Mammary epithelial cell (primary cell): ENCODE measurements at regions of chr14 and their contacts with region 1.

Region 1: GRCh38 chr14:37903343-37904191 is 304.1 kb upstream of the SSTR1 start:
- DNase-seq: peak; percentile 23
- H3K4me3 ChIP-seq: no peak overlapping the region
- H3K27ac ChIP-seq: no peak overlapping the region
- H3K4me1 ChIP-seq: no peaks in the 10 kb centered on the region
- H3K27me3 ChIP-seq: no peaks in the 10 kb centered on the region
- CTCF ChIP-seq: peak; percentile 50 to 51

Region 2: GRCh38 chr14:37936931-37937522 is 33.5 kb after region 1 on chr14:
- CTCF ChIA-PET with region 1: no interaction called
- dilution Hi-C with region 1: no loop called
- in situ Hi-C with region 1: no loop called
- intact Hi-C with region 1: no loop called
- DNase-seq: no peak
- H3K4me3 ChIP-seq: no peak overlapping the region
- H3K27ac ChIP-seq: no peak overlapping the region
- H3K4me1 ChIP-seq: no peaks in the 10 kb centered on the region
- H3K27me3 ChIP-seq: no peaks in the 10 kb centered on the region
- CTCF ChIP-seq: no peak

Region 3: DNA sequence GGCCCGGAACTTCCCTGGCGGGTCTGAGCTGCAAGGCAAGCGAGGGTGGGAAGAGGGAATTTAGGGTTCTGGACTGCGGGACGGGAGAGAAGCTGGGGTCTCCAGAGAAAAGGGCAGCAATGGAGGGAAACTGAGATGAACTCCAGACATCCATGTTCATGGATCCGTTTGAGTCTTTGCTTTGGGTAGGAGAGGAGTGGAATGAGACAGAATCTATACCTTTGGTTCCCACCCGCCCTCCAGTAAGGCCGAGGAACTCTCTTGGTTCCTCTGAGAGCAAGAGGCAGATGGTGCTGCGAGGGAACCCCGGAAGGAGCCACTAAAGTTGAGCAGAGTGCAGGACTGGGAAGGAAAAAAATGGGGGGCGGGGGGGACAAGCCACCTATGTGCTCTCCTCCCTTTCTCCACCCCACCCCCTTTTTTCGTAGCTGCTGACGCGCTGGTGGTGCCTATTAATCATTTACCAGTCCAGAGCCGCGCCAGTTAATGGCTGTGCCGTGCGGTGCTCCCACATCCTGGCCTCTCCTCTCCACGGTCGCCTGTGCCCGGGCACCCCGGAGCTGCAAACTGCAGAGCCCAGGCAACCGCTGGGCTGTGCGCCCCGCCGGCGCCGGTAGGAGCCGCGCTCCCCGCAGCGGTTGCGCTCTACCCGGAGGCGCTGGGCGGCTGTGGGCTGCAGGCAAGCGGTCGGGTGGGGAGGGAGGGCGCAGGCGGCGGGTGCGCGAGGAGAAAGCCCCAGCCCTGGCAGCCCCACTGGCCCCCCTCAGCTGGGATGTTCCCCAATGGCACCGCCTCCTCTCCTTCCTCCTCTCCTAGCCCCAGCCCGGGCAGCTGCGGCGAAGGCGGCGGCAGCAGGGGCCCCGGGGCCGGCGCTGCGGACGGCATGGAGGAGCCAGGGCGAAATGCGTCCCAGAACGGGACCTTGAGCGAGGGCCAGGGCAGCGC is 305.3 kb after region 1 on chr14:
- CTCF ChIA-PET with region 1: no interaction called
- dilution Hi-C with region 1: no loop called
- in situ Hi-C with region 1: no loop called
- intact Hi-C with region 1: loop called (anchors 10 kb)
- DNase-seq: no peak
- H3K4me3 ChIP-seq: no peak overlapping the region
- H3K27ac ChIP-seq: no peak overlapping the region
- H3K4me1 ChIP-seq: no peaks in the 10 kb centered on the region
- H3K27me3 ChIP-seq: peaks cover 3% of the 10 kb centered on the region
- CTCF ChIP-seq: no peak

Region 4: DNA sequence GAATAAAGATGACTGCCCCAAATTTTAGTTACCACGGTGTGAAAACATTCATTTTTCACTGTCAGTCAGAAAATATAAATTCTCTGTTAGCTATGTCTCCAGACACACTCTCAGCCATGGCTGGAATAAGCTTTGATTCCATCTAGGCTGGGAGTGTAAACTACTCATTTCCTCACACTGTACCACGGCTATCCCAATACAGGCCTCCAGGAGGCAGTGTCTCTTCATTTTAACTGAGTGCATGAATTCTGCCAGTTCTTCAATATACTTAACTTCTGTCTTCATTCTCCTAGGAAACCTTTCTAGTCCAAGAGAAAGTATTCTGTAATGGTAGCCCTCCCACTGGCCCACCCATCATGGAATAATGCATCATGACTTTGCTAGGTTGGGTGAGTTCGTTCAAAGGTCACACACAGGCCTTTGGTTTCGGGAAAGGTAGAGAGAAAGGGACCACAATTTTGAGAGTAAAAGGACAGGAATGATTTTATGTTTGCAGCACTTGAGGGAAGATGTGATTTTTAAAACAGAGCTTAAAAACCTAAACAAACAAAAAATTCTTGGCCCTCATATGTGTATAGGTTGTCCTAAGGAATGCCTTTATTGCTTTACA is 818.4 kb after region 1 on chr14:
- CTCF ChIA-PET with region 1: no interaction called
- dilution Hi-C with region 1: no loop called
- in situ Hi-C with region 1: no loop called
- intact Hi-C with region 1: loop called (anchors 5 kb)
- DNase-seq: peak; percentile 32
- H3K4me3 ChIP-seq: no peak overlapping the region
- H3K27ac ChIP-seq: no peak overlapping the region
- H3K4me1 ChIP-seq: no peaks in the 10 kb centered on the region
- H3K27me3 ChIP-seq: no peaks in the 10 kb centered on the region
- CTCF ChIP-seq: peak; percentile 78 to 86

Region 5: GRCh38 chr14:38867561-38868150 is 964.1 kb after region 1 on chr14:
- CTCF ChIA-PET with region 1: interaction called, 3 read pairs
- dilution Hi-C with region 1: no loop called
- in situ Hi-C with region 1: loop called (anchors 10 to 25 kb)
- intact Hi-C with region 1: loop called (anchors 1 kb)
- DNase-seq: peak; percentile 42
- H3K4me3 ChIP-seq: no peak overlapping the region
- H3K27ac ChIP-seq: no peak overlapping the region
- H3K4me1 ChIP-seq: no peaks in the 10 kb centered on the region
- H3K27me3 ChIP-seq: no peaks in the 10 kb centered on the region
- CTCF ChIP-seq: peak; percentile 86 to 88

Region 6: DNA sequence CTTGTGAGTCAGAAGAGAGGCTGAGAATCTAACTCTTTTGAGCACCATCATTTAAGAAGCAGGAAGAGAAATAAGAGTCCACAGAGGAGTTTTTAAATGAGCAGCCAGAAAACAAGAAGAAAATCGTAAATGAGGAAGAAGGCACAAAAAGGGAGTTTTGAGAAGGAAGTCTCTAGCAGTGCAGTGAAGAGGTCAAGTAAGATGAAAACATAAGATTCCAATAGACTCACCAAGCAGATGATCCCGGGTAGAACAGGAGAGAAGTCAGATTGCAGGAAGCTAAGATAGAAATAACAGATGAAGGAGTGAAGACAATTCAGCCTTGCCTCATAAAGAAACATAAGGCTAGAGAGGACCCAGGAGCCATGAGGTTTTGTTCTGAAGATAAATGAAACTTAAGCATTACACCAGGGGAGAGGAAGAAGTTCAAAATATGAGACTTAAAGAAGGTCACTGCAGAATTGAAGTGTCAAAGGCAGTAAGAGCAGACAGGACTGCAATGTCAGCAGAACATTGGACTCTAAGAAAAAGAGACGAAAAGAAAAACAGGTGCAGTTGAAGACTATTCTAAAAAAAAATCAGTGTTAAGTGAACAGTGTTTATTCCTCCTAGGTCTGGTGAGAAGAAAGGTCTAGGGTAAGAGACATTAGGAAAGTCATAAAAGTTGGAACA is 970.5 kb after region 1 on chr14:
- CTCF ChIA-PET with region 1: interaction called, 3 read pairs
- dilution Hi-C with region 1: no loop called
- in situ Hi-C with region 1: loop called (anchors 10 to 25 kb)
- intact Hi-C with region 1: no loop called
- DNase-seq: no peak
- H3K4me3 ChIP-seq: no peak overlapping the region
- H3K27ac ChIP-seq: no peak overlapping the region
- H3K4me1 ChIP-seq: no peaks in the 10 kb centered on the region
- H3K27me3 ChIP-seq: no peaks in the 10 kb centered on the region
- CTCF ChIP-seq: no peak

Region 7: GRCh38 chr14:39015360-39015961 is 1111.9 kb after region 1 on chr14:
- CTCF ChIA-PET with region 1: interaction called, 6 read pairs
- dilution Hi-C with region 1: no loop called
- in situ Hi-C with region 1: loop called in 1 of 2 experiments (anchors 25 kb)
- intact Hi-C with region 1: loop called (anchors 10 kb)
- DNase-seq: peak; percentile 11
- H3K4me3 ChIP-seq: no peak overlapping the region
- H3K27ac ChIP-seq: no peak overlapping the region
- H3K4me1 ChIP-seq: no peaks in the 10 kb centered on the region
- H3K27me3 ChIP-seq: no peaks in the 10 kb centered on the region
- CTCF ChIP-seq: peak; percentile 77 to 93